CD8-positive, alpha-beta memory T cell (primary cell): ENCODE measurements at regions of chr2 and their contacts with region 1.

Region 1: GRCh38 chr2:127064642-127065250 is 42.2 kb downstream of the BIN1 start:
- DNase-seq: peak in 3 of 5 donors; percentile 31 to 72 (median 39)
- H3K4me3 ChIP-seq: no peak overlapping the region
- H3K4me3 Mint-ChIP-seq: no peak overlapping the region
- H3K27ac ChIP-seq: peak overlapping the region; percentile 57
- H3K27ac Mint-ChIP-seq: peak overlapping the region in 5 of 8 donors; percentile 29 to 87 (median 63)
- H3K4me1 ChIP-seq: peaks cover 17% of the 10 kb centered on the region
- H3K4me1 Mint-ChIP-seq: peaks cover 14 to 41% (median 17%) of the 10 kb centered on the region in 3 donors
- H3K27me3 ChIP-seq: no peaks in the 10 kb centered on the region
- H3K27me3 Mint-ChIP-seq: no peaks in the 10 kb centered on the region

Region 2: GRCh38 chr2:126971481-126972278 is 93.1 kb before region 1 on chr2:
- CTCF ChIA-PET with region 1: no interaction called
- POLR2A ChIA-PET with region 1: no interaction called
- DNase-seq: peak; percentile 40 to 75 (median 51)
- H3K4me3 ChIP-seq: peak overlapping the region; percentile 58
- H3K4me3 Mint-ChIP-seq: peak overlapping the region in 6 of 7 donors; percentile 72 to 85 (median 78)
- H3K27ac ChIP-seq: no peak overlapping the region
- H3K27ac Mint-ChIP-seq: no peak overlapping the region
- H3K4me1 ChIP-seq: no peaks in the 10 kb centered on the region
- H3K4me1 Mint-ChIP-seq: peaks cover 3 to 7% (median 7%) of the 10 kb centered on the region in 3 donors
- H3K27me3 ChIP-seq: peaks cover 6% of the 10 kb centered on the region
- H3K27me3 Mint-ChIP-seq: peaks cover 31 to 71% of the 10 kb centered on the region in 2 donors

Region 3: GRCh38 chr2:127025359-127026166 is 39.2 kb before region 1 on chr2:
- CTCF ChIA-PET with region 1: no interaction called
- POLR2A ChIA-PET with region 1: no interaction called
- DNase-seq: peak; percentile 51 to 84 (median 71)
- H3K4me3 ChIP-seq: peak overlapping the region; percentile 80
- H3K4me3 Mint-ChIP-seq: peak overlapping the region; percentile 65 to 95 (median 88)
- H3K27ac ChIP-seq: no peak overlapping the region
- H3K27ac Mint-ChIP-seq: peak overlapping the region in 6 of 8 donors; percentile 28 to 97 (median 74)
- H3K4me1 ChIP-seq: peaks cover 7% of the 10 kb centered on the region
- H3K4me1 Mint-ChIP-seq: peaks cover 11 to 14% (median 13%) of the 10 kb centered on the region in 3 donors
- H3K27me3 ChIP-seq: no peaks in the 10 kb centered on the region
- H3K27me3 Mint-ChIP-seq: peaks cover 1 to 20% of the 10 kb centered on the region in 2 donors

Region 4: GRCh38 chr2:127049927-127050802 is 14.6 kb before region 1 on chr2:
- CTCF ChIA-PET with region 1: interaction called, 12 read pairs
- POLR2A ChIA-PET with region 1: no interaction called
- DNase-seq: peak; percentile 44 to 67 (median 53)
- H3K4me3 ChIP-seq: no peak overlapping the region
- H3K4me3 Mint-ChIP-seq: no peak overlapping the region
- H3K27ac ChIP-seq: no peak overlapping the region
- H3K27ac Mint-ChIP-seq: peak overlapping the region in 4 of 8 donors; percentile 45 to 80 (median 54)
- H3K4me1 ChIP-seq: peaks cover 3% of the 10 kb centered on the region
- H3K4me1 Mint-ChIP-seq: peaks cover 12 to 30% (median 13%) of the 10 kb centered on the region in 3 donors
- H3K27me3 ChIP-seq: no peaks in the 10 kb centered on the region
- H3K27me3 Mint-ChIP-seq: no peaks in the 10 kb centered on the region

Region 5: GRCh38 chr2:127081826-127082633 is 17.3 kb after region 1 on chr2:
- CTCF ChIA-PET with region 1: interaction called, 108 read pairs
- POLR2A ChIA-PET with region 1: interaction called, 8 read pairs
- DNase-seq: peak; percentile 69 to 92 (median 84)
- H3K4me3 ChIP-seq: peak overlapping the region; percentile 93
- H3K4me3 Mint-ChIP-seq: peak overlapping the region; percentile 89 to 96 (median 92)
- H3K27ac ChIP-seq: peak overlapping the region; percentile 87
- H3K27ac Mint-ChIP-seq: peak overlapping the region; percentile 95 to 100 (median 98)
- H3K4me1 ChIP-seq: peaks cover 86% of the 10 kb centered on the region
- H3K4me1 Mint-ChIP-seq: peaks cover 78 to 94% (median 87%) of the 10 kb centered on the region in 3 donors
- H3K27me3 ChIP-seq: no peaks in the 10 kb centered on the region
- H3K27me3 Mint-ChIP-seq: no peaks in the 10 kb centered on the region

Region 6: GRCh38 chr2:127086990-127087790 is 22.4 kb after region 1 on chr2:
- CTCF ChIA-PET with region 1: interaction called, 108 read pairs
- POLR2A ChIA-PET with region 1: interaction called, 8 read pairs
- DNase-seq: no peak
- H3K4me3 ChIP-seq: no peak overlapping the region
- H3K4me3 Mint-ChIP-seq: peak overlapping the region in 2 of 7 donors; percentile 19 to 54
- H3K27ac ChIP-seq: no peak overlapping the region
- H3K27ac Mint-ChIP-seq: peak overlapping the region in 7 of 8 donors; percentile 1 to 99 (median 81)
- H3K4me1 ChIP-seq: peaks cover 41% of the 10 kb centered on the region
- H3K4me1 Mint-ChIP-seq: peaks cover 38 to 47% (median 46%) of the 10 kb centered on the region in 3 donors
- H3K27me3 ChIP-seq: no peaks in the 10 kb centered on the region
- H3K27me3 Mint-ChIP-seq: no peaks in the 10 kb centered on the region

Region 7: GRCh38 chr2:127106951-127107621 is 42.3 kb after region 1 on chr2 and contains the start of gene BIN1:
- CTCF ChIA-PET with region 1: interaction called, 55 read pairs
- POLR2A ChIA-PET with region 1: no interaction called
- DNase-seq: peak; percentile 24 to 79 (median 68)
- H3K4me3 ChIP-seq: peak within 1 kb of the TSS; percentile 43
- H3K4me3 Mint-ChIP-seq: peak within 1 kb of the TSS; percentile 79 to 95 (median 87)
- H3K27ac ChIP-seq: no peak within 1 kb of the TSS
- H3K27ac Mint-ChIP-seq: peak within 1 kb of the TSS in 5 of 8 donors; percentile 47 to 74 (median 65)
- H3K4me1 ChIP-seq: peaks cover 13% of the 10 kb centered on the region
- H3K4me1 Mint-ChIP-seq: peaks cover 4 to 9% (median 5%) of the 10 kb centered on the region in 3 donors
- H3K27me3 ChIP-seq: peaks cover 4% of the 10 kb centered on the region
- H3K27me3 Mint-ChIP-seq: peaks cover 7 to 10% of the 10 kb centered on the region in 2 donors
- total RNA-seq, gene BIN1: 84.9 to 87.3 TPM

Region 8: DNA sequence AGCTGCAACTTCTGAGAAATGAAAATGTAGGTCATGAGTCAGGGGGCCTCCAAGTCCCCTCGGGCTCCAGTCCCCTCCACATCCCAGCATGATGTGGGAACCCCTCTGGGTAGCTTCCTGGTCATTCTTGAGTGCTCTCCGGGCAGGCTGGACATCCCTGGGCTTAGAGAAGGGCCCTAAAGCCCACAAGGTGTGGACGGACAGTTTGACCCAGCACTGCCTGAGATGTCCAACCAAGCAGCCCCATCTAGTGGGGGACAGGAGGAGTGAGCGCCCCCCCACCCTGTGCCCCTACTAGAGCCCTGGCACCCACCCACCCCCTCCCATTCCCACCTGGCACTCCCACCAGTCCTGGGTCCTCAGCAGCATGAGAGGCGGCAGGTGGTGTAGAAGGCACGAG is 109.4 kb after region 1 on chr2:
- CTCF ChIA-PET with region 1: interaction called, 31 read pairs
- POLR2A ChIA-PET with region 1: no interaction called
- DNase-seq: no peak
- H3K4me3 ChIP-seq: no peak overlapping the region
- H3K4me3 Mint-ChIP-seq: no peak overlapping the region
- H3K27ac ChIP-seq: no peak overlapping the region
- H3K27ac Mint-ChIP-seq: no peak overlapping the region
- H3K4me1 ChIP-seq: no peaks in the 10 kb centered on the region
- H3K4me1 Mint-ChIP-seq: no peaks in the 10 kb centered on the region
- H3K27me3 ChIP-seq: no peaks in the 10 kb centered on the region
- H3K27me3 Mint-ChIP-seq: peaks cover 9 to 10% of the 10 kb centered on the region in 2 donors

Region 9: GRCh38 chr2:127387655-127388422 is 323.1 kb after region 1 on chr2 and contains the start of gene MAP3K2:
- CTCF ChIA-PET with region 1: no interaction called
- POLR2A ChIA-PET with region 1: no interaction called
- DNase-seq: peak; percentile 91 to 97 (median 95)
- H3K4me3 ChIP-seq: peak within 1 kb of the TSS; percentile 92
- H3K4me3 Mint-ChIP-seq: peak within 1 kb of the TSS; percentile 89 to 95 (median 91)
- H3K27ac ChIP-seq: peak within 1 kb of the TSS; percentile 99
- H3K27ac Mint-ChIP-seq: peak within 1 kb of the TSS; percentile 99 to 100 (median 100)
- H3K4me1 ChIP-seq: peaks cover 45% of the 10 kb centered on the region
- H3K4me1 Mint-ChIP-seq: peaks cover 51 to 66% (median 60%) of the 10 kb centered on the region in 3 donors
- H3K27me3 ChIP-seq: no peaks in the 10 kb centered on the region
- H3K27me3 Mint-ChIP-seq: peaks cover 0 to 5% of the 10 kb centered on the region in 2 donors
- total RNA-seq, gene MAP3K2: 55.9 to 57.7 TPM

Region 10: DNA sequence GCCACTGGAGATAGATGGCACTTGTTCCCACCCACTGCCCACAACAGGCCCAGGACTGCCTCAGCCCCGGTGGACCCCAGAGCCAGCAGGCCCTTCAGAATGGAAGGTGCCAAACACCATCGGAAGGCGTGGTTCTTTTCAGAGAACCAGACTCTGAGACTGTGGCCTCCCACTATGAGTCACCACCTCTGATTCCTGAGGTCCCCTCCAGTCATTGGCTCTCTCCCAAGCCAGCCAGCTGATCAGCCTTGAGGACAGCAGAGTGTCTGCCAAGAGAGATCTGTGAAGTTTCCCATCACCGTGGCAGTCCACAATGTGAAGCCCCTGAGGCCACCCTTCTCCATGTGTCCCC is 333.5 kb after region 1 on chr2:
- CTCF ChIA-PET with region 1: no interaction called
- POLR2A ChIA-PET with region 1: no interaction called
- DNase-seq: peak in 1 of 5 donors; percentile 70
- H3K4me3 ChIP-seq: no peak overlapping the region
- H3K4me3 Mint-ChIP-seq: no peak overlapping the region
- H3K27ac ChIP-seq: no peak overlapping the region
- H3K27ac Mint-ChIP-seq: peak overlapping the region in 1 of 8 donors; percentile 74
- H3K4me1 ChIP-seq: no peaks in the 10 kb centered on the region
- H3K4me1 Mint-ChIP-seq: peaks cover 0 to 6% (median 2%) of the 10 kb centered on the region in 3 donors
- H3K27me3 ChIP-seq: no peaks in the 10 kb centered on the region
- H3K27me3 Mint-ChIP-seq: peaks cover 0 to 2% of the 10 kb centered on the region in 2 donors